ENCODE measurements at regions of chr17 and their contacts with region 1.

Region 1: GRCh38 chr17:57987580-57988421 is at the start of gene VEZF1:
- DNase-seq: peak; percentile 96
- H3K4me3 ChIP-seq: peak within 1 kb of the TSS; percentile 78 to 98
- H3K27ac ChIP-seq: peak within 1 kb of the TSS; percentile 96 to 100
- H3K4me1 ChIP-seq: peaks cover 20 to 47% of the 10 kb centered on the region in 2 experiments
- H3K27me3 ChIP-seq: no peaks in the 10 kb centered on the region
- CTCF ChIP-seq: no peak
- EP300 ChIP-seq: no peak
- RAD21 ChIP-seq: no peak
- polyA plus RNA-seq, gene VEZF1: 35.1 and 43.0 TPM in 2 replicates

Region 2: GRCh38 chr17:57965521-57966160 is 22.2 kb before region 1 on chr17:
- CTCF ChIA-PET with region 1: interaction called, 15 read pairs
- POLR2A ChIA-PET with region 1: no interaction called
- DNase-seq: no peak
- H3K4me3 ChIP-seq: no peak overlapping the region
- H3K27ac ChIP-seq: no peak overlapping the region
- H3K4me1 ChIP-seq: peaks cover 4% of the 10 kb centered on the region in 2 experiments; a peak in 2 of 4 replicates
- H3K27me3 ChIP-seq: no peaks in the 10 kb centered on the region
- CTCF ChIP-seq: no peak
- EP300 ChIP-seq: no peak
- RAD21 ChIP-seq: no peak

Region 3: GRCh38 chr17:57970706-57971105 is 17.1 kb before region 1 on chr17:
- CTCF ChIA-PET with region 1: interaction called, 15 read pairs
- POLR2A ChIA-PET with region 1: no interaction called
- DNase-seq: no peak
- H3K4me3 ChIP-seq: no peak overlapping the region
- H3K27ac ChIP-seq: peak overlapping the region; percentile 26 to 42; a peak in 2 of 4 replicates
- H3K4me1 ChIP-seq: peaks cover 13 to 25% of the 10 kb centered on the region in 2 experiments; a peak in 2 of 4 replicates
- H3K27me3 ChIP-seq: no peaks in the 10 kb centered on the region
- CTCF ChIP-seq: no peak
- EP300 ChIP-seq: no peak; a peak in 1 of 4 replicates
- RAD21 ChIP-seq: no peak

Region 4: GRCh38 chr17:58060596-58061191 is 72.9 kb after region 1 on chr17:
- CTCF ChIA-PET with region 1: no interaction called
- POLR2A ChIA-PET with region 1: no interaction called
- DNase-seq: no peak
- H3K4me3 ChIP-seq: no peak overlapping the region
- H3K27ac ChIP-seq: no peak overlapping the region
- H3K4me1 ChIP-seq: peaks cover 0 to 7% of the 10 kb centered on the region in 2 experiments; a peak in 1 of 4 replicates
- H3K27me3 ChIP-seq: peaks cover 32% of the 10 kb centered on the region
- CTCF ChIP-seq: no peak
- EP300 ChIP-seq: no peak
- RAD21 ChIP-seq: no peak

Region 5: DNA sequence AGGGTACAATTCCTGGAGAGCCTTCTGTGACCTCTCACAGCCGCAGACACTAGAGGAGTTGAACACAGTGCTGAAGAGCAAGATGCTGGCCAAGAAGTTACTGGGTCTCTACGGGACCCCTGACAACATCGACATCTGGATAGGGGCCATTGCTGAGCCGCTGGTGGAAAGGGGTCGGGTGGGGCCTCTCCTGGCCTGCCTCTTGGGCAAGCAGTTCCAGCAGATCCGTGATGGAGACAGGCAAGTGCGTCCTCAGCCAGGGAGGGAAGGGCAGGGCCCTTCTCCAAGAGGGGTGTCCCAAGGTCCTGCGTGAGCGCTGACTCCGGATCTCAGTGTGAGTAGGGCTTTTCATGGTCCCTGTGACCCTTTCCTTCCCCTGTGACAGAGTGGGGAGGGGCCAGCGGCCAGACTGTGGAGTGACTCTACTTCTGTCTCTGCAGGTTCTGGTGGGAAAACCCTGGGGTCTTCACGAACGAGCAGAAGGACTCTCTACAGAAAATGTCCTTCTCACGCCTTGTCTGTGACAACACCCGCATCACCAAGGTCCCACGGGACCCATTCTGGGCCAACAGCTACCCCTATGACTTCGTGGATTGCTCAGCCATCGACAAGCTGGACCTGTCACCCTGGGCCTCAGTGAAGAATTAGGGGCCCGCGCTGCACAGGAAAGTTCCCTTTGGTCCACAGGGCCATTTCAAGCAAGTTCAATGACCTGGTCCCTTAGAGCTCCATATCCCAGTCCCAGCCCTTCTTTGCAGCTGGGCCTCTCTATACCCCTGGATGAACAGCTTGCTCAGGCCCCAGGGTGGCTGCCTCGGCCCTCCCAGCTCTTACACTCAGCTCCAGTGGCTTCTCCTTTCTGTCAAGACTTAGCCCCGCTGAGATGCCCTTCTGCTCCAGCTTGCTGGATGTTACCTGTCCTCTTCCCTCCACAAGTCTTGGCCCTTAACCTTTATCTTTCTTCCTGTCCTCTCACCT is 279.8 kb after region 1 on chr17:
- CTCF ChIA-PET with region 1: no interaction called
- POLR2A ChIA-PET with region 1: no interaction called
- DNase-seq: no peak
- H3K4me3 ChIP-seq: no peak overlapping the region
- H3K27ac ChIP-seq: no peak overlapping the region
- H3K4me1 ChIP-seq: no peaks in the 10 kb centered on the region
- H3K27me3 ChIP-seq: peaks cover 43% of the 10 kb centered on the region
- CTCF ChIP-seq: no peak
- EP300 ChIP-seq: no peak
- RAD21 ChIP-seq: no peak